ENCODE measurements at regions of chr2 and their contacts with region 1.

Region 1: GRCh38 chr2:20231632-20232031 is 6.7 kb upstream of the SDC1 start:
- DNase-seq: no peak
- CTCF ChIP-seq: no peak

Region 2: DNA sequence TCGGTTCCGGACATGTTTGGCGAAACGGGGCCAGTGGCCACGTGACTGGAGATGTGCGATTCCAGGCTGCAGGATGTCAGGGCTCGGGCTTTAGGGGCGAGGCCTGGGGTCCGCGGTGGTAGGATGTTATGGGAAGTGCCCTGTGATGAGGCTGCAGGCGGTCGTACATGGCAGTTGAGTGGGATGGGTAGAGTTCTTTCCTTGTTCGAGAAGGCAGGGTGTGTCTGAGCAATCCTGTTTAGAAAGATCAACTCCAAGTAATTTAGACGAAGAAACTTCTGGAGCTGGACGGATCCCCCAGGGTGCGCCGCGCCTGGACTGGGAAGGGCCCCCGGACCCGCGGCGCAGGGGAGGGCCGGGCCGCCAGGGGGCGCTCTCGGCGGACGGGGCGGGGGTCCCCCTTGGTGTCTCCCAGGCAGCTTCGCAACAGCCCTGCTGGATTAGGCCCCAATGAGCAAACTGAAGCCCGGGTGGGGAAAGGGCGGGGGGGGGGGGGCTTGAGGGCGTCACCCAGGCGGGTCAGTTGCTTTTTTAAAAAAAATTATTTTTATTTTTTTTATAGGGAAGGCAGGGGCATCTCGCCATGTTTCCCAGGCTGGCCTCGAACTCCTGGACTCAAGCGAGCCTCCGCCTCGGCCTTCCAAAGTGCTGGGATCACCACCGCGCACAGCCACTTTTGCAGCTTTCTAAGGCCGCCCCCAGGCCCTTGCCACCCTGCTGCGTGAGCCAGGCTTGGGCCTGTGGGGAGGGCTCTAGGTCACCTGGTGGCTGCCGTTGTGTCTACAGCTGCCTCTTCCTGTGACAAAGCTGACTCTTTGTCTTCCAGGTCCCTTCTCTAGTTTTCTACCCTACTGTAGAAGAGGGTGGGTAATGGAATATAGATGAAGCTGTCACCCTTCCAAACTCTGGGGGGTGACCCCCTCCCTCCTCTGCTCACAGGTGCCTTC is 10.7 kb after region 1 on chr2:
- CTCF ChIA-PET with region 1: interaction called, 38 read pairs
- POLR2A ChIA-PET with region 1: no interaction called
- DNase-seq: peak; percentile 77
- CTCF ChIP-seq: peak; percentile 55

Measured in GM10248 (cell line).